Motor neuron (in vitro differentiated cells): ENCODE measurements at regions of chr16 and their contacts with region 1.

Region 1: DNA sequence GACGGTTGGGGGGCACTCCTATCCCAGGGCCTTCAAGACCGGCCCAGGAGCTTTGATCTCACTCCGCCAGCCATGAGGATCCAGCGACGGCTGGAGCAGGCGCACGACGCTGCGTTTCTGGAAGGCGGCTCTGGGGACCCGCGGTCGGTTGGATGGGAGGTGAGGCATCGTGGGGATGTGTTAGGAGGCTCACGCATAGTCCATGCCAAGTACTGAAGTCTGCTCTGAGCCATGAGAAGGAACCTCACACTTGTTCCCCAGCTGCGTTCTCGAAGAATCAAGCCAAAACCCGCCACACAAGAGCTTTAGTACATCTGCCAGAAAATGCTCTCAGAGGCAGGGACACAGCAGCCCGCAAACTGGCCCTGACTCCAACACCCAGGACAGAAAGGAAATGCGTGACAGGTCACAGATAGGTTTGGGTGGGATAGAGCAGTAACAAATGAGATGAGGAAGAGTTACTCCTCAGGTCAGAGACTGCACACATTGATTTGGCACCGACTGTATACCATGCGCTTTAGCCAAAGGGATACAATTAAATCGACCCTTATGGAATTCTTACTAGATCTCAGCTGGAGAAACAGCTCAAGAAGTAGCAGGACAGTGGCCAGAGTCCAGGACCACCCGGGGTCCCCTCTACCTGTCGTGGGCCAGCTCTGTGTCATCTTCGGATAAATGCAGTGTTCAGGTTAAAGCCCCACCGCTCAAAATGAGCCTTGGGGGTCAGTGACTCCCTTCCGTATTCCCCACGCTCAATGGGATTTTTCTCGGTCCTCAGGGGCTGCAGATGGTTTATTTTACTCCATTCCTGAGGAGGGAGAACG is 6.7 kb upstream of the GSG1L start:
- ATAC-seq: peak in 6 of 8 experiments; percentile 12 to 41 (median 26)
- H3K4me3 ChIP-seq: no peak overlapping the region
- H3K27ac ChIP-seq: no peak overlapping the region
- H3K4me1 ChIP-seq: no peaks in the 10 kb centered on the region

Region 2: GRCh38 chr16:27972500-27972899 is 97.7 kb before region 1 on chr16:
- in situ Hi-C with region 1: loop called in 3 of 9 experiments (anchors 10 kb)
- ATAC-seq: peak in 3 of 8 experiments; percentile 71 to 87 (median 83)
- H3K4me3 ChIP-seq: no peak overlapping the region
- H3K27ac ChIP-seq: no peak overlapping the region
- H3K4me1 ChIP-seq: no peaks in the 10 kb centered on the region

Region 3: GRCh38 chr16:28202147-28202746 is 132.1 kb after region 1 on chr16:
- in situ Hi-C with region 1: no loop called
- ATAC-seq: no peak
- H3K4me3 ChIP-seq: no peak overlapping the region
- H3K27ac ChIP-seq: no peak overlapping the region
- H3K4me1 ChIP-seq: no peaks in the 10 kb centered on the region